ENCODE measurements at regions of chr4 and their contacts with region 1.

Region 1: GRCh38 chr4:180664766-180665368 is 1578.3 kb upstream of the TENM3 start:
- DNase-seq: peak; percentile 92
- H3K4me3 ChIP-seq: no peak overlapping the region
- H3K27ac ChIP-seq: peak overlapping the region; percentile 55
- H3K4me1 ChIP-seq: peaks cover 32% of the 10 kb centered on the region
- CTCF ChIP-seq: peak; percentile 94

Region 2: DNA sequence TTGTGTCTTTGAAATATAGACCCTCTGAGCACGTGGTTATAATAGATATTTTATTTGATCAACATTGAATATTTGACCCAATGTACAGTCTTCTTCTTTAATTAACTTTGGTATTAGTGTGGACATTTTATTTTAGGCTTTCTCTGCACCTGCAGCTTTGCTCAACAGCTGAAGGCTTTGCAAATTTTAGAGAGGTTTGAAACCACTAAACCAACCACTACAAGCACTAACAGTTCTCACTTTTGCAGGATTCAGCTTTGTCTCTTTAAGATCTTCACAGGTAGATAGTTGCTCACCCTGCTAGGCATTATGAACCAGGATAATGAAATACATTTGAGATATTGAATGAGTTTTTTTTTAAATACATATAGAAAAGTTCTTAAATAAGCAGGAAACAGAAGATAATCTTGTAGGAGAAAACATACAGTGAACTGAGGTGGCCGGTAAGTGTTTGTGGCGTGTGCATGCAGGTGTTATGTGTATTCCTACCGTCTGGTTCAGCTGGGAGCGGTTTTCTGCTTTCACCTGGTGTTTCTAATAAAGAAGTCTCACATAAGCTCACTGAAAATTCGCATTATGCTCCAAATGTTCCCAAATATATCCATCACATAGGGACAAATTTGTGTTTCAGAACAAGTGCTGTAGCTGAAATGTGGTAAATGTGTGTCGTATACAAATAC is 70.0 kb after region 1 on chr4:
- CTCF ChIA-PET with region 1: no interaction called
- POLR2A ChIA-PET with region 1: interaction called, 4 read pairs
- intact Hi-C with region 1: loop called (anchors 1 kb)
- DNase-seq: peak; percentile 84
- H3K4me3 ChIP-seq: peak overlapping the region; percentile 38
- H3K27ac ChIP-seq: peak overlapping the region; percentile 98
- H3K4me1 ChIP-seq: peaks cover 46% of the 10 kb centered on the region
- CTCF ChIP-seq: no peak

Region 3: GRCh38 chr4:180770265-180770664 is 105.4 kb after region 1 on chr4:
- CTCF ChIA-PET with region 1: no interaction called
- POLR2A ChIA-PET with region 1: no interaction called
- intact Hi-C with region 1: no loop called
- DNase-seq: no peak
- H3K4me3 ChIP-seq: no peak overlapping the region
- H3K27ac ChIP-seq: no peak overlapping the region
- H3K4me1 ChIP-seq: peaks cover 4% of the 10 kb centered on the region
- CTCF ChIP-seq: no peak

Region 4: DNA sequence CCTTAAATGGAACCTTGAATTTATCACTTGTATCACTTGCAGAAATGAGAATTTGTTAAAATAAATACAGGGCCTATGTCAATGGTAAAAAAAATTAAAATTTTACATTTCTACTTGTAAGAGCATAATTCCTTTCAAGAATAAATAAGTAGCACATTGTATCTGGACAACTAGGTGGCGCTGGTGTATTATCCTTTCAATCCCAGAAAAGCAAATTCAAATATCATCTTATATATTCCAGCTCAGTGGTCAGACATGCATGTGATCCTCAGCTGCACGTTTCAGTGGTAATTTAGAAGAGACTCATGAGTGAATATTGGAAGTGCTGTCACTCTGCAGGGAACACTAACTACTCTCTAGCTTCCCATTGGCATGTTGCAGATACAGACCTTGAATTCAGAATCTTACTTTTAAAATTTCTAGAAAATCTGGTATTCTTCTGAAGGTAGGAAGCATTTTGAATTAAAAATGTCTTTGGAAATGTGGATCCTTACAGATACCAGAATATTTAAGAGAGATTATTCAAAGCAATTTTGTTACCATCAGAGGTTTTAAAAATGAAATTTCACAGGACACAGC is 163.7 kb after region 1 on chr4:
- CTCF ChIA-PET with region 1: no interaction called
- POLR2A ChIA-PET with region 1: interaction called, 3 read pairs
- intact Hi-C with region 1: loop called (anchors 5 kb)
- DNase-seq: peak; percentile 68
- H3K4me3 ChIP-seq: no peak overlapping the region
- H3K27ac ChIP-seq: no peak overlapping the region
- H3K4me1 ChIP-seq: peaks cover 21% of the 10 kb centered on the region
- CTCF ChIP-seq: peak; percentile 95

Region 5: GRCh38 chr4:180840142-180840541 is 175.3 kb after region 1 on chr4:
- CTCF ChIA-PET with region 1: no interaction called
- POLR2A ChIA-PET with region 1: no interaction called
- intact Hi-C with region 1: loop called (anchors 2 kb)
- DNase-seq: peak; percentile 30
- H3K4me3 ChIP-seq: no peak overlapping the region
- H3K27ac ChIP-seq: no peak overlapping the region
- H3K4me1 ChIP-seq: peaks cover 11% of the 10 kb centered on the region
- CTCF ChIP-seq: no peak

Region 6: GRCh38 chr4:180909279-180909678 is 244.4 kb after region 1 on chr4:
- CTCF ChIA-PET with region 1: no interaction called
- POLR2A ChIA-PET with region 1: no interaction called
- intact Hi-C with region 1: no loop called
- DNase-seq: peak; percentile 23
- H3K4me3 ChIP-seq: no peak overlapping the region
- H3K27ac ChIP-seq: no peak overlapping the region
- H3K4me1 ChIP-seq: no peaks in the 10 kb centered on the region
- CTCF ChIP-seq: peak; percentile 56

Region 7: DNA sequence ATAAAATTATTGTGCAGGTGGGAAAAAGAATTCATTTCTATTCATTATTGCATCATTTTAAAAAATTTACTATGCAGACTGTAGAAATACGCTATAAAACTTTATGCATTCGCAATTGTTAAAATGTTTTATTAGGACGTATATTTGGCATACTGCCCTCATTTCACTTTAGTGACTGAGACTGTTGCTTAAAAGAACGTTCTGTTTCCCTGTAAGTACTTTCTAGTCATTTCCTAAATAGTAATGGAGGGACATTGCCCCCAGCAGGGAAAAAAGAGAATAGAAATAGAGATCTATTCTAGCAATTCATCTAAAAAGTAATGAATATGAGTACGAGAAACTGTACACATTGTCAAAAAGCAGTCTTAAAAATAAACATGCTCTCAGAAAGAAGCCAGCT is 282.6 kb after region 1 on chr4:
- CTCF ChIA-PET with region 1: no interaction called
- POLR2A ChIA-PET with region 1: no interaction called
- intact Hi-C with region 1: loop called (anchors 2 kb)
- DNase-seq: peak; percentile 43
- H3K4me3 ChIP-seq: no peak overlapping the region
- H3K27ac ChIP-seq: no peak overlapping the region
- H3K4me1 ChIP-seq: no peaks in the 10 kb centered on the region
- CTCF ChIP-seq: peak; percentile 63

Region 8: GRCh38 chr4:181143250-181143854 is 478.5 kb after region 1 on chr4:
- CTCF ChIA-PET with region 1: no interaction called
- POLR2A ChIA-PET with region 1: interaction called, 4 read pairs
- intact Hi-C with region 1: loop called (anchors 5 kb)
- DNase-seq: peak; percentile 74
- H3K4me3 ChIP-seq: no peak overlapping the region
- H3K27ac ChIP-seq: no peak overlapping the region
- H3K4me1 ChIP-seq: no peaks in the 10 kb centered on the region
- CTCF ChIP-seq: peak; percentile 96

Region 9: GRCh38 chr4:181528570-181529184 is 863.8 kb after region 1 on chr4:
- CTCF ChIA-PET with region 1: no interaction called
- POLR2A ChIA-PET with region 1: interaction called, 3 read pairs
- intact Hi-C with region 1: loop called (anchors 5 kb)
- DNase-seq: peak; percentile 60
- H3K4me3 ChIP-seq: no peak overlapping the region
- H3K27ac ChIP-seq: no peak overlapping the region
- H3K4me1 ChIP-seq: no peaks in the 10 kb centered on the region
- CTCF ChIP-seq: peak; percentile 96